Right ventricle myocardium inferior (tissue), 1 donor: ENCODE measurements at regions of chr3 and their contacts with region 1.

Region 1: GRCh38 chr3:172061724-172062184 is 22.4 kb downstream of the FNDC3B start:
- DNase-seq: no peak
- ATAC-seq: peak; percentile 46

Region 2: GRCh38 chr3:172021164-172021563 is 40.6 kb before region 1 on chr3:
- intact Hi-C with region 1: no loop called
- DNase-seq: no peak
- ATAC-seq: peak; percentile 72

Region 3: DNA sequence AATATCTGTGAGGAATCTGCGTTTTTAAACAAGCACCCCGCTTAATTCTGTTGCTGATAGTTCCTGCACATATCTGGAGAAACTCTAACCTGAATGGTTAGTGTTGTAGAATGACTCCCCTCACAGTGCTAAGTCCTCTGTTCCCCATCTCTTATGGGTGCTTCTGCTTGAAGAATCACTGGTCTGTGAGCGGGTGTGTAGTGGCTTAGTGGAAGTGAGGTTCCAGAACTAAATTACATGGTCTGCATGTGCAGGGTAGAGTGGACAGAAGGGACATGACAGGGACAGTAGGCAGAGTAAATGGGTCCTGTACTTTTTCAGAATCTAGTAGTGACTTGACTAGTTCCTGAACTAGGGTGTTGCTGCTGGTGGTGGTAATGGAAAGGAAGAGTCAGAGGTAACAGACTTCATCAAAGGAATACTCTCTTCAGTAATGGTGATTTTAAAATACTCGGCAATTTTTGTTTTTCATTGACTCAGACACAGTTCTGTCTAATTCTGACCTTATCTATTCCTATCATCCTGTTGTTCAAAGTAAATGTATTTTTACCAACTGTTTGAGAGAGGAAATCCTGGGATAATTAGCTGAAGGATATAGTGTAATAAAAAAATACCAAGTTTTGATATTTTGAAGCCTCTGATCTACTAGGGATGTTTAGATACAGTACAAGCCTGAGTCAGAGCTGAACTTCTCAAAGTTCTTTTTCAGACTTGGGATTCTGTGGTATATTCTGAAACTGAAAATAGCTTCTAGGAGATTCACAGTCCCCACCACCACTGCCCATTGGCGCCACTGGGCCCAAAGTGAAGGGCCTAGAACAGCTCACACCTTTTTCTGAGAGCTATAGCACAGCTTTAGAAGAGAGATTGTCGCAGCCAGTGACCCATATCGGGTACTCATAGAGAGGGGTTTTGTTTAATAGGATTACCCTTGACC is 33.1 kb after region 1 on chr3:
- intact Hi-C with region 1: loop called (anchors 5 kb)
- DNase-seq: no peak
- ATAC-seq: no peak

Region 4: DNA sequence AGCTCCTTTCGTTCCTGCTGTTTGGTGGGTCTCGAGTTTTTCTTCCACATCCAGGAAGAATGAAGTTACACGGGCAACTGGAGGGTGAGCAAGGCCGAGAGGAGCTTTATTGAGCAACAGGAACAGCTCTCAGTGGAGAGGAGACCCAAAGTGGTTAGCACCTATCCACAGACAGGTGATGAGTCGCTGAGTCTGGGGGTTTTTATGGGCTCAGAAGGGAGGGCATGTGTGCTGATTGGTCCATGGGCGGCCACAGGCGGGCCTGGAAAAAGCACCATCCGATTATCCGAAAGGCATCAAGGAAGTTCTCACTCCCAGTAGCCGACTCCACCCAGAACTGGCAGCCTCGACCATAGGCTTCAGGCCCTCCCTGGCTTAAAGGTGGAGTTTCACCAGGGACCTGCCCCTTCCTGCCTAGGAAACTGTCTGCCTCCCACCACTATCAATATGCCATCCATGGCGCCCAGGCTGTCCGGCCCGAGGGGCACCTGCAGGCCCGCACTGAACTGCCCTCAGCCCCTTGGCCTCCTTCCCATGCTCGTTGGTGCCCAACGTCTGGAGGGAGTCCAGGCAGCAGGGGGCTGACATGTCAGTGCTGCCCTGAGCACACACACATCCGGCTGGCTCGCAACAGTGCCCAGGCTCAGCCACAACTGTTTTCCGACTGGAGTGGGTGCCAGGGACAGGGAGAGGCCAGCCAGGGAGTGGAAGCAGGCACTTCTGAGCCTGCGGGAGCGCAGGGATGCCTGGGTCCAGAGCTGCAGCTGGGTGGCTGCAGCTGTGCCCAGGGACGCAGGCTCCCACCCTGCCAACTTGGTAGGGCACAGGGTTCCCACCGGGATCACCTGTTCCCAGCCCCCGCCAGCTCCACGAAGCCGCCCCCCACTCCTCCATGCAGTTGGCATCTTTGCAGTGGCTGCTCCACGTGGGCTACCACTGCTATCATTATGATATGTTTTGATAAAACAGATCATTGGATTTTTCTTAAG is 147.9 kb after region 1 on chr3:
- intact Hi-C with region 1: no loop called
- DNase-seq: peak; percentile 68
- ATAC-seq: peak; percentile 83